Calu3 (cell line): ENCODE measurements at regions of chr7 and their contacts with region 1.

Region 1: GRCh38 chr7:17769918-17770317 is 170.4 kb downstream of the SNX13 start:
- DNase-seq: peak; percentile 86
- H3K4me3 Mint-ChIP-seq: no peak overlapping the region
- H3K27ac Mint-ChIP-seq: no peak overlapping the region
- H3K4me1 Mint-ChIP-seq: peaks cover 33% of the 10 kb centered on the region
- H3K27me3 Mint-ChIP-seq: no peaks in the 10 kb centered on the region
- CTCF ChIP-seq: peak; percentile 84

Region 2: DNA sequence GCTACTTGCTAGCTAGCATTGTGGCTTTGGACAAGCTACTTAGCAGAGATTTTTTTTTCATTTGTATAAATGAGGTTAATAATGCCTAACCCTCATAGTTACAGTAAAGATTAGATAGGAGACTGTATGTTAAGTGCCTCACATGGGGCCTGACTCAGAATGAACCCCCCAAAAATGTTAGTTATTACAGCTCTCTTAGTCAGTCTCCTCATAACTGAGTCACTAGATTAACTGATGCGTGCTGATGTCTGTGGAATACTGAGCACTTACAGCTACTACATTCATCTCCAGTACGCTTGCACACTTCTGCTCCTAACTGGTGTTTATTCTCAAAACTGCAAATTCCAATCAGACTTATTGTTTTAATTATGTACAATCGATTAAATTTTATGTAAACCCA is 144.9 kb before region 1 on chr7:
- CTCF ChIA-PET with region 1: no interaction called
- intact Hi-C with region 1: no loop called
- DNase-seq: no peak
- H3K4me3 Mint-ChIP-seq: no peak overlapping the region
- H3K27ac Mint-ChIP-seq: no peak overlapping the region
- H3K4me1 Mint-ChIP-seq: peaks cover 30% of the 10 kb centered on the region
- H3K27me3 Mint-ChIP-seq: no peaks in the 10 kb centered on the region
- CTCF ChIP-seq: no peak

Region 3: GRCh38 chr7:17680943-17681351 is 89.0 kb before region 1 on chr7:
- CTCF ChIA-PET with region 1: no interaction called
- intact Hi-C with region 1: loop called (anchors 2 kb)
- DNase-seq: no peak
- H3K4me3 Mint-ChIP-seq: no peak overlapping the region
- H3K27ac Mint-ChIP-seq: no peak overlapping the region
- H3K4me1 Mint-ChIP-seq: peaks cover 48% of the 10 kb centered on the region
- H3K27me3 Mint-ChIP-seq: no peaks in the 10 kb centered on the region
- CTCF ChIP-seq: peak; percentile 54

Region 4: DNA sequence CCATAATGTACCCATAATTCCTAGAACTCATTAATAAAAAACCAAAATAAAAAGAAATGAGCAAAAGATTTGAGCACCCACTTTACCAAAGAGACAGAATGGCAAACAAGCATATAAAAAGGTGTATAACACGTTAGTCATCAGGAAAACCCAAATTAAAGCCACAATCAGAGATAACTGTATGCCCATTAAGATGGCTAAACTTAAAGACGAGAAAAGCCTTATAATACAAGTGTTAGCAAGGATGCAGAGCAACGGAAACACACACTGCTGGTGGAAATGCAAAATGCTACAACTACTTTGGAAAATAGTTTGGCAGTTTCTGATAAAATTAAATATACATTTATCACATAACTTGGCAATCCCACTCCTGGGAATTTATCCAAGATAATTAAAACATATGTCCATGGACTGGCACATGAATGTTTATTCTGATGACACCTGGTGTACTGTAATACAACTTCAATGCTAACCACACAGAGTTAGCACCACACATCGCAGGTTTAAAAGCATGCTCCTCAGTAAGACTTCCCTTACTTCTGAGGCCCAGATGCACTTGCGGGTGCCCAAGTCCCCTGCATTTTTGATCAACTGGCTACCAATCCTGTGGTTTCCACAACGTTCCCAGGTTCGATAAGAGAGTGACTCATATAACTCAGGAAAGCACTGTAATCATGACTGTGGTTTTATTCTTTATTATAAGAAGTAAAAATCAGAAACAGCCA is 11.7 kb after region 1 on chr7:
- CTCF ChIA-PET with region 1: interaction called, 11 read pairs
- intact Hi-C with region 1: no loop called
- DNase-seq: peak; percentile 68
- H3K4me3 Mint-ChIP-seq: no peak overlapping the region
- H3K27ac Mint-ChIP-seq: peak overlapping the region; percentile 21
- H3K4me1 Mint-ChIP-seq: peaks cover 21% of the 10 kb centered on the region
- H3K27me3 Mint-ChIP-seq: no peaks in the 10 kb centered on the region
- CTCF ChIP-seq: no peak

Region 5: GRCh38 chr7:17971411-17971810 is 201.5 kb after region 1 on chr7:
- CTCF ChIA-PET with region 1: interaction called, 11 read pairs
- intact Hi-C with region 1: no loop called
- DNase-seq: no peak
- H3K4me3 Mint-ChIP-seq: no peak overlapping the region
- H3K27ac Mint-ChIP-seq: no peak overlapping the region
- H3K4me1 Mint-ChIP-seq: peaks cover 12% of the 10 kb centered on the region
- H3K27me3 Mint-ChIP-seq: no peaks in the 10 kb centered on the region
- CTCF ChIP-seq: peak; percentile 12

Region 6: DNA sequence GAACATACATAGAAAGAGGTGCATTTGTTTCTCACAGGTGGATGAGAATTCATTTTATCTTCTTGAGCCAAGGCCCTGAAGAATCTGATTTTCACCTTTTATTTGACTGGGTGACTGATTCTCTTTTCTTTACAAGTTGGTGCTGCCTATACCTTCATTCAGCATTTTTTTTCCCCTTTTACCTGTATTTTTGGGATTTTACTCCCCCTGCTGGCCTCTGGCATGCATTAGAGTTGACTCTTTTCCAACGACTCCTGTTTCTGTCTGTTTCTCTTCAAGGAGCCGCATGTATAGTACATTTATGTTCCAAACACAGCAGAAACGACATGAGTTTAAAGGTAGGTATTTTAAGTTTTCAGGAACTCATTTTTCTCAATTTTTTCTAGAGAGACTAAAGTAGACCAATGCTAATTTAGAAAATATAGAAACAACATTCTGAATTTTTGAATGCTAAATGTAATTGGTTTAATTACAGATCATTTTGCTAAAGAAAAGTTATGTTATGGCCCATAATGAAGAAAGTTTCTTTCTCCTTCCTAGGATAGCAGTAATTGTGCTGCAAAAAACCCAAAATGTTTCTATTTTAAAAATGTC is 575.8 kb after region 1 on chr7:
- CTCF ChIA-PET with region 1: interaction called, 27 read pairs
- intact Hi-C with region 1: loop called (anchors 1 kb)
- DNase-seq: peak; percentile 74
- H3K4me3 Mint-ChIP-seq: no peak overlapping the region
- H3K27ac Mint-ChIP-seq: no peak overlapping the region
- H3K4me1 Mint-ChIP-seq: no peaks in the 10 kb centered on the region
- H3K27me3 Mint-ChIP-seq: no peaks in the 10 kb centered on the region
- CTCF ChIP-seq: peak; percentile 92